HEK293 (cell line): ENCODE measurements at regions of chrX and their contacts with region 1.

Region 1: DNA sequence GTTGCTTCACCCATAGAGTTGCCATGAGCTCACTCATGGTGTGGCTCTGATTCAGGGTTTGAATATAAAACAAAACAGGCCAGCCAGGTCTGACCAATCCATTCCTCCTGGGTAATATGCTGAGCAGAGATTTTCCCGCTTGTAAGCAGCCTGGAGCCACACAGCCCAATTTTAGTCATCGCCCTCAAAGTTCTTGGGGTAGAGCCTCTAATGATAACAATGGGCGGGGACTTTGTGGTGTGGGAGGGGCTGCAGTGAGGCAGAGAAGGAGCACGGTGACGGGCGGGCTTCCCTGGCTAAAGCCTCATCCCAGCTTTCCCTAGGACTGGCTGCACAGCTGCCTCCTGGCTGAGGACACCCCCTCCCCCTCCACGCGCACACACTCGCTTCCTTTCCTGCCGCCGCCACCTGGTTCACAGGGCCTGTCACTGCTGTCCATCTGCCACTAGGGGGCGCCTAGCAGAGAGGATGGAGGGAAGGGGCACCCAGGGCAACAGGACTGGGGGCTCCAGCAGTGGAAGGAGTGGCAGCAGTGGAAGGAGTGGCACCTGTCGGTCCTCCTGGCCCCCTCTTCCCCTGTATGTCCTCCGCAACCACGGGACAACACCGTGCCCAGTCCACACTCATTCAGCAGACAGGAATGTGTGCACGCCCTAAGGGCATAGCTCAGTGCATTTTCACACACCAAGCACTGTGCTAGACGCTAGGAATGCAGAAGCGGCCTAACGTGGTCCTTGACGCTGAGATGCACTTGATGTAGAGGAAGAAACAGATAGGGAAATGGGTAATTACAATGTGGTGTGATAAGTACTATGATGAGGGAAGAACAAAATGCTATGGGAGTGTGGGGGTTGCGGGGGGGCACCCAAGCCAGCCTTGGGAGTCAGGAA is 26.8 kb downstream of the PRPS1 start:
- H3K4me3 ChIP-seq: no peak overlapping the region
- H3K27ac ChIP-seq: no peak overlapping the region
- H3K4me1 ChIP-seq: no peaks in the 10 kb centered on the region
- CTCF ChIP-seq: peak; percentile 76

Region 2: DNA sequence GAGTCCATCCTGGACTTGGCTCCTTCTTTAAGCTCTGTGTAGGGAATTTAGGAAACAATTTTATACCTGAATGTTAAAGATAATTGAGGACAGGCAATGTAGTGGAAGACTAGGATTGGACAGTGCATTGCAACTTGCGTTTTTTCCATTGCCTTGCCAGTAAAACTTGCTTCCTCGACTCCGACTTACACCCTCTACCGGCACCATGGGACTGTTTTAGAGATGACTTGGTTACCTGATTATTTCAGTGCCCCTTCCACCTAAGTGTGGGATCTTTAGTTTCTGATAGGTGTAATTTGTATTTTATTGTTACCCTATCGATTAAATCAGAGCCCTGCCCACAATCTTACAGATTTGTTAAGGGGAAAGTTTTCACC is 25.6 kb before region 1 on chrX:
- CTCF ChIA-PET with region 1: interaction called, 6 read pairs
- POLR2A ChIA-PET with region 1: interaction called, 10 read pairs
- H3K4me3 ChIP-seq: peak overlapping the region; percentile 58
- H3K27ac ChIP-seq: peak overlapping the region; percentile 63; the same call in 1 of the 2 replicates
- H3K4me1 ChIP-seq: 0 out of 2 replicates have a peak, but pooled peaks cover 7% of the 10 kb centered on the region
- CTCF ChIP-seq: no peak